Ascending aorta (tissue), 2 donors: ENCODE measurements at regions of chr3 and their contacts with region 1.

Region 1: GRCh38 chr3:88058591-88059368 is at the starts of genes CGGBP1 and ZNF654:
- DNase-seq: peak; percentile 97 to 100
- H3K4me3 ChIP-seq: peak within 1 kb of the TSS; percentile 81 to 94
- H3K27ac ChIP-seq: peak within 1 kb of the TSS; percentile 94 to 96
- H3K4me1 ChIP-seq: peaks cover 0 to 20% of the 10 kb centered on the region in 2 donors
- H3K27me3 ChIP-seq: no peaks in the 10 kb centered on the region
- CTCF ChIP-seq: no peak
- total RNA-seq, gene CGGBP1: 49.5 TPM
- total RNA-seq, gene ZNF654: 2.3 TPM

Region 2: GRCh38 chr3:86982883-86983282 is 1075.9 kb before region 1 on chr3:
- intact Hi-C with region 1: loop called (anchors 10 kb)
- DNase-seq: no peak
- H3K4me3 ChIP-seq: peak overlapping the region in 1 of 2 donors; percentile 18
- H3K27ac ChIP-seq: peak overlapping the region; percentile 65 to 91
- H3K4me1 ChIP-seq: peaks cover 0 to 37% of the 10 kb centered on the region in 2 donors
- H3K27me3 ChIP-seq: no peaks in the 10 kb centered on the region
- CTCF ChIP-seq: no peak

Region 3: DNA sequence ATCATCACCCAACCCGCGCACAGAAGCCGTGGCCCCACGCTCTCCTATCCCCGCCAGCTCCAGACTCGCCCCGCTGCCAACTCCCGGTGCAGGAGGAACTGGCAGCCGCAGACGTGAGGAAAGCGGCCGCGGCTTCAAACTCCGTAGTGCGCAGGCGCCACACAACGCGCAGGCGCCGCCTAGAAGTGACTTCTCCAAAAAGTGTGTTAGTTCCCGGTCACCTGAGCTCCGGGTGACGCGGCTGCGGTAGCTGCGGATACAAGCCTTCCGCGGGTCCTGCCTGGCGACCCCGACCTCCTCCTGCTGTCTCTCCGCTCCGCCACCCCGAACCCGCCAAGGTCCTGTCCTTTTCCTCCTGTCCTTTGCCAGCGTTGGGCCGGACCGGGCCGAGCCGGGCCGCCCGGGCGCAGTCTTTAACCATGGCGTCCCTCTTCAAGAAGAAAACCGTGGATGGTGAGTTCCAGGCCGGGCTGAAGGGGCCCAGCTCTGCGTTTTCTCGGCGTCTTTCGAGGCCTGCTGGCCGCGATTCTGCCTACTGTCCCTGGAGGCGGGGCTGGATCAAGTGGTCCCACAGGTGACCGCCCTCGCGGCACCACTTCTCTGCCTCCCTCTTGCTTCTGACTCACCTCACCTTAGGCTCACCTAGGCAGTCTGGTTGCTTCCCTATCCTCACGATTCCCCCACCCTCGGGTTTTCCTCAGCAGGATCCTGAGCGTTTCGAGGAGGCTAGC is 831.5 kb before region 1 on chr3 and contains the start of gene CHMP2B:
- intact Hi-C with region 1: loop called (anchors 5 kb)
- DNase-seq: peak; percentile 74 to 97
- H3K4me3 ChIP-seq: peak within 1 kb of the TSS; percentile 78 to 88
- H3K27ac ChIP-seq: peak within 1 kb of the TSS; percentile 83 to 88
- H3K4me1 ChIP-seq: peaks cover 0 to 2% of the 10 kb centered on the region in 2 donors
- H3K27me3 ChIP-seq: no peaks in the 10 kb centered on the region
- CTCF ChIP-seq: no peak
- total RNA-seq, gene CHMP2B: 27.7 TPM

Region 4: GRCh38 chr3:88031642-88032077 is 27.1 kb before region 1 on chr3:
- intact Hi-C with region 1: loop called (anchors 2 kb)
- DNase-seq: no peak
- H3K4me3 ChIP-seq: peak overlapping the region; percentile 53 to 63
- H3K27ac ChIP-seq: peak overlapping the region; percentile 68 to 71
- H3K4me1 ChIP-seq: peaks cover 0 to 2% of the 10 kb centered on the region in 2 donors
- H3K27me3 ChIP-seq: no peaks in the 10 kb centered on the region
- CTCF ChIP-seq: no peak

Region 5: DNA sequence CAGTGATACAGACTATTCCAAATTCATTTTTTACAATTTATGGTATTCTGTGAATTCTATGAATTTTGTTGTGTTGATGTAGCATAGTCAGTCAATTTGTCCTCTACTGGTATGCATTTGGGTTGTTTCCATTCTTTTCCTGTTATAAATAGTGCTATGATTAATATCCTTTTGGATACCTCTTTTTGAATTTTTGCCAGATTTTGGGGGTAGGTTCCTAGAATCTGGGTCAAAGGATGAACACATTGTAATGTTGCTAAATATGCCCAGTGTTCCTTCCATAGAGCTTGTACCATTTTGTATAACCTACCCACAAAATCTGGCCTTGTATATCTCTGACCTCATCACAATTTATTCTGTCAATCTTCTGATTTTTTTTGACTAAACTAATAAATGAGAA is 46.5 kb after region 1 on chr3:
- intact Hi-C with region 1: loop called (anchors 2 kb)
- DNase-seq: no peak
- H3K4me3 ChIP-seq: no peak overlapping the region
- H3K27ac ChIP-seq: no peak overlapping the region
- H3K4me1 ChIP-seq: no peaks in the 10 kb centered on the region
- H3K27me3 ChIP-seq: no peaks in the 10 kb centered on the region
- CTCF ChIP-seq: no peak

Region 6: GRCh38 chr3:88149509-88150362 is 91.0 kb after region 1 on chr3 and contains the start of gene C3orf38:
- intact Hi-C with region 1: loop called (anchors 1 kb)
- DNase-seq: peak; percentile 57 to 94
- H3K4me3 ChIP-seq: peak within 1 kb of the TSS; percentile 70 to 99
- H3K27ac ChIP-seq: peak within 1 kb of the TSS; percentile 80 to 94
- H3K4me1 ChIP-seq: peaks cover 3 to 17% of the 10 kb centered on the region in 2 donors
- H3K27me3 ChIP-seq: no peaks in the 10 kb centered on the region
- CTCF ChIP-seq: no peak
- total RNA-seq, gene C3orf38: 13.0 TPM